Activated CD4-positive, alpha-beta T cell treated with anti-CD3 and anti-CD28 coated beads for 36 hours (primary cell): ENCODE measurements at regions of chr17 and their contacts with region 1.

Region 1: DNA sequence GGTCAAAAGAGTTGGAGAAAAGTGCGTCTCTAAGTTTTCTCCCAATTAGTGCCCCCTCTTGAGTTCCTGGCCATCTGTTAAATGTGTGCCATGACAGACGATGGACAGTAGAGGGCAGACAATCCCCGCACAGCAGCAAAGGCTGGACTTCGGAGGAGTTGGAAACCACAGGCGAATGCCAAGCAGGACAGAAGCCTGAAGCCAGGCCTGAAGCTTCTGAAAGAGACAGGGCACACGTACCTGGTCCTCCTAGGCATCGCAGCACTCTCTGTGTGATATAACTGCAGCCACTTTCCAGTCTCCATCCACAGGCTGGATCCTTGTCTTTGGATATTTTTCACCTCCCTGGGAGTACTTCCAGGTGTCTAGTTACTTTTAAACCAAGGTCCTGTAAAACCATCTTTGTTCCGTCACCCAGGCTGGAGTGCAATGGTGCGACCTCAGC is 14.5 kb downstream of the C17orf100 start:
- DNase-seq: peak; percentile 69
- ATAC-seq: peak; percentile 75
- H3K4me3 Mint-ChIP-seq: no peak overlapping the region
- H3K27ac Mint-ChIP-seq: no peak overlapping the region
- H3K4me1 Mint-ChIP-seq: peaks cover 7% of the 10 kb centered on the region
- H3K27me3 Mint-ChIP-seq: no peaks in the 10 kb centered on the region

Region 2: DNA sequence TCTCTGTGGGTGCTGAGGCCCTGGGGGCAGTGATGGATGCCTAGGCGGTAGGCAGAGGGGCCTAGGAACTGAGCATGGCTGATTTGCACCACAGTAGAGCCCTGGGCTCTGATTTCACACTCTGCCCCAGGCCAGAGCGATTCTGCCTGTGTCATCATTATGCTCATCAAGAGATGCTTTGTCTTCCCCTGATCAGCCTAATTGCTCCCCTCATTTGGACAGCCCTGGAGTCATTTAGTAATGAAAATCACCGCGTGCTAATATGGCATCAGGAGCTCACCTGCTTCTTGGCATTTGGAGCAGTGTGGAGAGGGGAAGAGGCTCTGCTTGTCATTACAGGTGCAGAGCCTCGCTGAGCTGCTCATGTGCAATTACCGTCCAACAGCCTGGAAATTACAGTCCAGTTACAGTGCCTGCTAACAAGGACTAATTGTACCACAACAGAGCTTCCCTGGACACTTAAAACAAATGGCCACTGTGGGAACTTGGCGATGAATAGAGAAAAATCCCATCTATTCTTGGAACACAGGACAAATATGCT is 753.0 kb before region 1 on chr17:
- CTCF ChIA-PET with region 1: no interaction called
- POLR2A ChIA-PET with region 1: no interaction called
- intact Hi-C with region 1: no loop called
- DNase-seq: no peak
- ATAC-seq: no peak
- H3K4me3 Mint-ChIP-seq: no peak overlapping the region
- H3K27ac Mint-ChIP-seq: no peak overlapping the region
- H3K4me1 Mint-ChIP-seq: no peaks in the 10 kb centered on the region
- H3K27me3 Mint-ChIP-seq: peaks cover 8% of the 10 kb centered on the region

Region 3: GRCh38 chr17:6793748-6794493 is 127.8 kb after region 1 on chr17:
- CTCF ChIA-PET with region 1: interaction called, 3 read pairs
- POLR2A ChIA-PET with region 1: no interaction called
- intact Hi-C with region 1: loop called in 1 of 2 experiments (anchors 5 kb)
- DNase-seq: no peak
- ATAC-seq: peak; percentile 39
- H3K4me3 Mint-ChIP-seq: no peak overlapping the region
- H3K27ac Mint-ChIP-seq: no peak overlapping the region
- H3K4me1 Mint-ChIP-seq: peaks cover 4% of the 10 kb centered on the region
- H3K27me3 Mint-ChIP-seq: peaks cover 20% of the 10 kb centered on the region

Region 4: GRCh38 chr17:6800422-6801027 is 134.4 kb after region 1 on chr17:
- CTCF ChIA-PET with region 1: interaction called, 3 read pairs
- POLR2A ChIA-PET with region 1: no interaction called
- intact Hi-C with region 1: loop called in 1 of 2 experiments (anchors 1 kb)
- DNase-seq: peak; percentile 39
- ATAC-seq: no peak
- H3K4me3 Mint-ChIP-seq: no peak overlapping the region
- H3K27ac Mint-ChIP-seq: no peak overlapping the region
- H3K4me1 Mint-ChIP-seq: no peaks in the 10 kb centered on the region
- H3K27me3 Mint-ChIP-seq: peaks cover 3% of the 10 kb centered on the region

Region 5: DNA sequence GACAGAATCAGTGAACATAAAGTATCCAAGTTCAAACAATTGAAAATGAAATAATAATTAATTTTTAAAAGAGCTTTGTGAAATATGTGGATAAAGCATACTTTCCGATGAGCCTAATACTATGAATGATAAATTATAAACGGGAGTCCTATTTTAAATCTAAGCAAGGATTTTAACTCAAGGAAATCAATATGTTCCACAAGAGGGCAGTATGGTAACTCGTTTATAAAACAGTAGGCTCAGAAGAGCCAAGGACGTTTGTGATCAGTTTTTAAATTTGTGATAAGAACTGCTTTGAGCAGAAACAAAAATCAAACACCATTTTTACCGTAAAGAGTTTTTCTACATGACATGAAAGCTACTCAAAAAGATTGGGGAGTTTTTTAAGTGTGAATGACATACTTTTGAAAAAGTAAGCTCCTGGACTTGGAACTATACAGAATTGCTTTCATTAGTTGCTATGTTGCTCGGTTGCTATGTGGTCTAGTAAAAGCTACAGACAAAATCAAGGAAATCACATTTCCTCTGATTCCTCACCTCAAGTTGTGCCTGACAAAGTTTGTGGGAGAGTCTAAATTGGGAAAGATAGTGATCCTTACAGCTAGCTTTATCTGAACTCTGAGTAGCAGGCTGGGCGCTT is 177.3 kb after region 1 on chr17:
- CTCF ChIA-PET with region 1: interaction called, 7 read pairs
- POLR2A ChIA-PET with region 1: no interaction called
- intact Hi-C with region 1: loop called in 1 of 2 experiments (anchors 1 kb)
- DNase-seq: no peak
- ATAC-seq: peak; percentile 51
- H3K4me3 Mint-ChIP-seq: no peak overlapping the region
- H3K27ac Mint-ChIP-seq: no peak overlapping the region
- H3K4me1 Mint-ChIP-seq: peaks cover 2% of the 10 kb centered on the region
- H3K27me3 Mint-ChIP-seq: peaks cover 26% of the 10 kb centered on the region

Region 6: DNA sequence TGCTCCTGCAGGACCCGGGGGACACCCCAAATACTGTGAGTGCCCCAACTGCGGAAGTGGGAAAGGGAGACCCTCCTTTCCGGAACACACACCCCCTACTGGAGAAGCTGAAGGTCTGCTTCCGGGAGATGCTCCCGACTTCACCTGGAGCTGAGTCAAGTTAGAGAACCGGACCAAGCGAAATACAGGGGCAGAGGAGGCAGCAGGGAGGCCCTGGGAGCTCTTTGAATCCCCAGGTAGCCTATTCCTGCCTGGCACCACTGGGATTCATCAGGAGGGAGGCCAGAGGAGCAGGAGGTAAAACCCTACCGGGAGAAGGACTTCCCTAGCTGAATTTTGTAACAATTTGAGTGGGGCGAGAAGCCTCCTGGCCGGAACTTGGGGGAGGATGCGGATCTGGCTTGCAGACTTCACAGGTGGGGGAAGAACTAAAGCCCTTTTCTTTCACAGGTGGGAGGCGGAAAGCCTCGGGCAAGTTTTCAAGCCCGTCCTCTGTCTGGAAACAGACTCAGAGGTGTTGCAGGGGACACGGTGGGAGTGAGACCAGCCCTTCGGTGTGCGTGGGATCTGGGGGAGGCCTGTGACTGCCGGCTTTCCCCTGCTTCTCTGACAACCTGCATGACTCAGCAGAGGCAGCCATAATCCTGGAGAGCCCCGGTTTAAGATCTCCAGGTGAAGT is 187.8 kb after region 1 on chr17:
- CTCF ChIA-PET with region 1: no interaction called
- POLR2A ChIA-PET with region 1: no interaction called
- intact Hi-C with region 1: loop called in 1 of 2 experiments (anchors 10 kb)
- DNase-seq: peak; percentile 50
- ATAC-seq: peak; percentile 47
- H3K4me3 Mint-ChIP-seq: peak overlapping the region; percentile 68
- H3K27ac Mint-ChIP-seq: peak overlapping the region; percentile 59
- H3K4me1 Mint-ChIP-seq: peaks cover 12% of the 10 kb centered on the region
- H3K27me3 Mint-ChIP-seq: no peaks in the 10 kb centered on the region

Region 7: GRCh38 chr17:6894206-6894528 is 228.1 kb after region 1 on chr17:
- CTCF ChIA-PET with region 1: interaction called, 3 read pairs
- POLR2A ChIA-PET with region 1: no interaction called
- intact Hi-C with region 1: loop called in 1 of 2 experiments (anchors 5 kb)
- DNase-seq: peak; percentile 65
- ATAC-seq: peak; percentile 55
- H3K4me3 Mint-ChIP-seq: no peak overlapping the region
- H3K27ac Mint-ChIP-seq: no peak overlapping the region
- H3K4me1 Mint-ChIP-seq: no peaks in the 10 kb centered on the region
- H3K27me3 Mint-ChIP-seq: peaks cover 34% of the 10 kb centered on the region

Region 8: DNA sequence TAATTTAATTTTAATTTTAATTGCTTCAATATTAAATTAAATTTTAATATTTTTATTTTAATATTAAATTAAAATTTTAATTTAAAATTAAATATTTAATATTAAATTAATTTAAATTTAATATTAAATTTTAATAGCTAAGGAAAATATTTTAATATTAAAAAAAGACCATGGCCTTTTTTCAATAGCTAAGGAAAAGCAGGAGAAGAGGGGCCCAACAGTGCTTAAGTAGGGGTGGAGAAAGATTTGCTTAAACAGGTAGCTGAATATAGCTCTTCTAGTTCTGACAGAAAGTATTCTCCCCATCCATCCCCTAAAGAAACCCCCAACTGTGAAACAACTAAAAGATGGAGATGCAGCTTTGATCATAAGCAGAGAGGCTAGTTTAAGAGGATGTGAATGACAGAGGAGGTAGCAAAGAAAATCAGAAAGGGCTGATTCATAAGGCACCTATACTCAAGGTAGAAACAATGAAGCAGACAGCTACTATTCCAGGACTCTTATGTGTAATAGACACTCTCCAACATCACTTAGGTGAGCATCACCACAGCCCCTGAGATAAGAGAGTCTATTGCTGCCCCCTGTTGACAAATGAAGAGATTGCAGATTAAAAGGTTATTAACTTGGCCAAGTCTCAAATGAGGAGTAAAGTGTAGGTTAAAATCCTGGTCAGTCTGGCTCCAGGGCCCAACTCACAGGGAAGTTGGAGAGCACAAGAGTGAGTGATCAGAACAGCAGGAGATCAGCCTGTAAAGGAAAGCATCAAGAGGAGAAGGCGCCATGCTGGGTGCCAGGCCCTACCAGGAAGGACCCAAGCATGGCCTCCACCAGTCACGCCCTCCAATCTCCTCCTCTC is 338.5 kb after region 1 on chr17:
- CTCF ChIA-PET with region 1: interaction called, 6 read pairs
- POLR2A ChIA-PET with region 1: no interaction called
- intact Hi-C with region 1: loop called in 1 of 2 experiments (anchors 1 kb)
- DNase-seq: peak; percentile 37
- ATAC-seq: peak; percentile 99
- H3K4me3 Mint-ChIP-seq: no peak overlapping the region
- H3K27ac Mint-ChIP-seq: no peak overlapping the region
- H3K4me1 Mint-ChIP-seq: peaks cover 20% of the 10 kb centered on the region
- H3K27me3 Mint-ChIP-seq: no peaks in the 10 kb centered on the region